A549 (cell line): ENCODE measurements at regions of chr12 and their contacts with region 1.

Region 1: GRCh38 chr12:52969828-52970569 is 21.1 kb downstream of the KRT18 start:
- DNase-seq: peak in 1 of 2 experiments; percentile 96
- ATAC-seq: peak; percentile 39 to 67
- H3K4me3 ChIP-seq: 0 out of 3 replicates have a peak overlapping the region, but pooled peaks have one; percentile 3
- H3K27ac ChIP-seq: peak overlapping the region; percentile 90 to 91
- H3K4me1 ChIP-seq: peaks cover 72% of the 10 kb centered on the region
- CTCF ChIP-seq: no peak
- EP300 ChIP-seq: peak; percentile 72 to 91; a peak in 4 of 5 replicates
- POLR2A ChIP-seq: no peak
- RAD21 ChIP-seq: 0 out of 5 replicates have a peak, but pooled peaks of 1 of the 2 experiments have one; percentile 1

Region 2: DNA sequence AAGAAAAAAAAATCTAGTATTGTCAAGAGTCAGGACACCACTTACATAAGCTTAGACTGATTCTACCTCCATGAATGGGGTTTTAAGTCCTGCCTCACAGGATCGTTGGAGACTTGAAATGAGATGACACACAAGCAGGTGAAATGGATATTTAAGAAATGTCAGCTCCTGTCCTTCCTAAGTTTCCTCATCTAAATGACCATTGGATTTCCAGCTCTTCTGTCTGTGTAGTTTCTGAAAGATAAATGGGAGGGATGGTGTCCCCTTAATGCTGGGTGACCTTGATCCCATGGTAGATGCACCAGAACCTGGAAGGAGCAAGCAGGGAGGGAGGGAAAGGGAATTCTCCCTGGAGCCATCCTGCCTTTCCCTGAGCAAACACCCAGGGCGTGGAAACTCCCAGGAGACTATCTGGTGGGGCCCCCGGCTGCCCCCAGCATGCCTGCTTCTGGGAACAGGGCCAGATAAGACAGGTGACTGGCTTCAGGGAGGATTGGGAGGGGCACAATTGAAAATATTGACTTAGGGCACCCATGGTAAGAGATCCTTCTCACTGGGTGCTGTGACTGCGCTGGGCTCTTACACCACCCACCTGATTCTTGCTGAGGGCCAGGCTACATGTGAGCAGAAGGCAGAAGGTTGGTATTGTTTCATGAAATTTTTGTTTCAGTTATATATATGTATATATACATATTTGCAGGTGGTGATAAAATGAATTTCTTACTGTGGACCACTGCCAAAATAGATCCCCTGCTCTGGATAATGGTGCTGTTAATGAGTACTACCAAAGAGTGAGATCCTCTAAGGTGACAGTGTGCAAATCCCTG is 74.7 kb before region 1 on chr12:
- CTCF ChIA-PET with region 1: interaction called, 1,736 read pairs
- POLR2A ChIA-PET with region 1: interaction called, 14 read pairs
- DNase-seq: peak; percentile 85 to 98
- ATAC-seq: peak; percentile 66 to 71
- H3K4me3 ChIP-seq: 0 out of 3 replicates have a peak overlapping the region, but pooled peaks have one; percentile 7
- H3K27ac ChIP-seq: peak overlapping the region; percentile 78 to 91
- H3K4me1 ChIP-seq: peaks cover 59% of the 10 kb centered on the region
- CTCF ChIP-seq: no peak
- EP300 ChIP-seq: peak; percentile 76 to 84; a peak in 2 of 5 replicates
- POLR2A ChIP-seq: no peak
- RAD21 ChIP-seq: 0 out of 5 replicates have a peak, but pooled peaks of 1 of the 2 experiments have one; percentile 27

Region 3: GRCh38 chr12:52956987-52957386 is 13.0 kb before region 1 on chr12:
- CTCF ChIA-PET with region 1: interaction called, 37 read pairs
- POLR2A ChIA-PET with region 1: interaction called, 50 read pairs
- DNase-seq: peak in 1 of 2 experiments; percentile 69
- ATAC-seq: peak; percentile 25 to 43; a peak in 3 of 6 replicates
- H3K4me3 ChIP-seq: no peak overlapping the region
- H3K27ac ChIP-seq: peak overlapping the region; percentile 18 to 61; a peak in 3 of 6 replicates
- H3K4me1 ChIP-seq: peaks cover 21% of the 10 kb centered on the region
- CTCF ChIP-seq: no peak
- EP300 ChIP-seq: no peak
- POLR2A ChIP-seq: no peak
- RAD21 ChIP-seq: no peak